BJ (cell line): ENCODE measurements at regions of chr1 and their contacts with region 1.

Region 1: GRCh38 chr1:17502326-17502778 is 37.1 kb upstream of the ARHGEF10L start:
- DNase-seq: peak; percentile 46
- H3K4me3 ChIP-seq: no peak overlapping the region
- H3K27me3 ChIP-seq: no peaks in the 10 kb centered on the region
- CTCF ChIP-seq: peak; percentile 96

Region 2: DNA sequence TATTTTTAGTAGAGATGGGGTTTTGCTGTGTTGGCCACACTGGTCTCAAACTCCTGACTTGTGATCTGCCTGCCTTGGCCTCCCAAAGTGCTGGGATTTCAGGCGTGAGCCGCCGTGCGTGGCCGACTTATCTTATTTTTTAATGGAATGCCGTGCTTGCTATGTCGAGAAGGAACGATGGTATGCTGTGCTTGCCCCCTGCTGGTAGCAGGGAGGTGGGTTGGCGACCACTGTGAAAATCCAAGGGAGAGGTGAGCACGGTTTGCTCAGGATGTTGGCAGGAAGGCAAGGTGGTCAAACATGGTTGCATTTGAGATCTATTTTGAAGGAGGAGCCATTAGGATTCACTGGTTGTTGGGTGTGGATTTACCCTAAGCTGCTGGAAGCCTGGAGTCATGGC is 17.1 kb before region 1 on chr1:
- CTCF ChIA-PET with region 1: interaction called, 14 read pairs
- POLR2A ChIA-PET with region 1: no interaction called
- DNase-seq: no peak
- H3K4me3 ChIP-seq: no peak overlapping the region
- H3K27me3 ChIP-seq: no peaks in the 10 kb centered on the region
- CTCF ChIP-seq: peak; percentile 37; the same call in 1 of the 2 replicates

Region 3: DNA sequence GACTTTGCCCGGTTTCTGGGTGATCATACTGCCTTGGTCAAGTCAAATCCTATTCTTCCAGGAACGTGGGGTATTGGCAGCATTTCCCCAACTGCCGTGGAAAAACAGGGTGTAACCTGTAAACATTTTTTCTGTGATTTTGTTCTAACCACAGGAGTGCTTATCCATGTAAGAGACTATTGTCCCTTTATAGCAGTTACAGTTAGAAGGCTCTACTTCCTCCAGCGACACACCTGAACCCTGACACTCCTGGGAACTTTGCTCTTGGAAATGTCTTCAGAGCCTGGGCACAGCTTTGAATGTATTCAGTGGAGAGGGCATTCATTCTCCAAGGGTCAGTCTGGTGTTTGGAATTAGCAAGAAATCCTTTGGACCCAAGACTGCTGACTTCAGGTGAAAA is 10.8 kb after region 1 on chr1:
- CTCF ChIA-PET with region 1: interaction called, 33 read pairs
- POLR2A ChIA-PET with region 1: no interaction called
- DNase-seq: no peak
- H3K4me3 ChIP-seq: no peak overlapping the region
- H3K27me3 ChIP-seq: peaks cover 4% of the 10 kb centered on the region; the same call in 1 of the 2 replicates
- CTCF ChIP-seq: no peak

Region 4: DNA sequence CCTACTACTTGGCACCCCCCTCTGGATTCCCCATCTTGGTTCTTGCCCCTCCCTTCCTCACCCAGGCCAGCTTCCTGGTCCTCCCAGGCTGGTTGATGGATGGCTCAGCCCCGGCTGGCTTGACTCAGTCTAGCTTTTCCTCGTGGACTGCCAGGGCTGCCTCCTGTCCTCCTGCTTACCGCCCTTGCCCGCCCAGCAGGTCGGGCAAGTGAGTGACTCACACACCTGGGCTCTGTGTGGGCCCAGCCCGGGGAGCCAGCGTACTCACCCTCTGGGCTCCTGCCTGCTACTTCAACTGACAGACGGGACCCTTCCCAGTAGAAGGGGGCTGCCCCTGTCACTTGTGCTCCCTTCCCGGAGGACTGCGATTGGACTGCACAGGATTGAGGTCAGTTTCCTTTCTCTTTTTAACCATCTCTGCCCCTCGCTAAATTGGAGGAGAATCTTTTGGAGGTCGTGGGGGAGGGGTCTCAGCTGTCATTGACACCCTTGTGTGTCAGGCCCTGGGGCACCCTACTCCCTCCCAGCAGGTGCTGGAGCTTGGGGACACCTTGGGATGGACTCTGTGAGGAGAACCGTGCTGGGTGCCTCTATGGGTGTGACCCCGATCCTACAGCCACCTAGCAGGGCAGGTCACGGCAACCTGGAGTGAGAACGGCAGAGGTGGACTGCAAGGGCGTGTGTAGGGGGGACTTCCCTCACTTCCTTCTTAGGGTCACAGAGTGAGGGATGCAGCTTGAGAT is 17.9 kb after region 1 on chr1:
- CTCF ChIA-PET with region 1: interaction called, 33 read pairs
- POLR2A ChIA-PET with region 1: no interaction called
- DNase-seq: no peak
- H3K4me3 ChIP-seq: no peak overlapping the region
- H3K27me3 ChIP-seq: peaks cover 3% of the 10 kb centered on the region; the same call in 1 of the 2 replicates
- CTCF ChIP-seq: no peak

Region 5: DNA sequence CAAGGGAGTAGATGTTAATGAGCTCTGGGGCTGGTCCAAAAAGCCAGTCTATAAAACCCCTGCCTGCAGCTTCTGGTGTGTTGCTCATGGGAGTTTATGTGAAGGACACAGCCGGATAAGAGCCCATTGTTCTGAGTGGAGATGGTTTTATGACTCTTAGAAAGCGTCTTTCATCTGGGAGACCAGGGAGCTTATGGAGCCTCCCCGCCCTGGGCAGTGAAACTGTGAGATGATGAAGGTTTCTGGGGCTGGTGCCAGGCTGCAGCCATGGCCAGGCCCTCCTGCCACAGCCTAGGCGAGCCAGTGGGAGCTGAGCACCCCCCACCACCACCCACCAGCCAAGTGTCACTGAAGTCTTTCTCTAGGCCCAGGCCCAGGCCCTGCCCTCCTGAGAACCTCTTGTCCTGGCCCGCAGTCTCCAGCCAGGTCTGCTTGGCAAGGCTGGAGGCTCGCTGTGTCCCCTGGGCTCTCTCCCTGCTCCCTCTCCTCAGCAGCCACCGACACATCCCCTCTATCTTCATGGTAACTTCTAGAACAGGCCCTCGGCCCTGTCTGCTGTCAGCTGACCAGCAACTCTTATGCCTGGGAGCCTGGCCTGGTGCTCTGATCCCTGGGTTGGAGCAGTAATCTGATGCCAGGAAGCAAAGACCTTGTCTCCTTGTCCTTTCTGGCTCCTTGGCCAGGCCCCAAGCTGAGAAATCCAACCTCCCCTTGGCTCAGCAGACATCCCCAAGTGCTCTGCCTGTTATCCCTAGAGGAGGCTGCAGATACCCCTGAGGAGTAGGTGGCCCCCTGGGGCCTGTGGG is 29.5 kb after region 1 on chr1:
- CTCF ChIA-PET with region 1: interaction called, 11 read pairs
- POLR2A ChIA-PET with region 1: no interaction called
- DNase-seq: no peak
- H3K4me3 ChIP-seq: no peak overlapping the region
- H3K27me3 ChIP-seq: no peaks in the 10 kb centered on the region; the same call in 1 of the 2 replicates
- CTCF ChIP-seq: no peak

Region 6: DNA sequence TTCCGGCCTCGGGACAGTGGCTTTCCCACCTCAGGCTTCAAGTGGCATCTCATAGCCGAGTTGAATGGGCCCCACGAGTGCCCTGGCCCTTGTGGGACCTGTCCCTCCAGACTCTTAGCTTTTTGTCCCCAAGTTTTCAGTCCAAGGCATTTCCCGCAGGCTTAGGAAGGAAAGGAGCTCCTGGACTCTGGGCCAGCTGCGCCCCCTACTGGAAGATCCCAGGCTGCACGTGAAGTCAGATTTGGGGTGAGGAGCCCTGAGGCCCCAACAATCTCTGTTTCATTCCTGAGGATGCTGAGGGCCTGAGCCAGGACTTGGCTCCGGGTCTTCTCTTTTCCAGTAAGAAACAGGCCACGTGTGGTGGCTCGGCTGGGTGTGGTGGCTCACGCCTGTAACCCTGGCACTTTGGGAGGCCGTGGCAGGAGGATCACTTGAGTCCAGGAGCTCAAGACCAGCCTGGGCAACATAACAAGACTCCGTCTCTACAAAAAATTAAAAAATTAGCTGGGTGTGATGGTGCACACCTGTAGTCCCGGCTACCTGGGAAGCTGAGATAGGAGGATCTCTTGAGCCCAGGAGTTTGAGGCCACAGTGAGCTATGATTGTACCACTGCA is 104.6 kb after region 1 on chr1:
- CTCF ChIA-PET with region 1: interaction called, 531 read pairs
- POLR2A ChIA-PET with region 1: no interaction called
- DNase-seq: no peak
- H3K4me3 ChIP-seq: no peak overlapping the region
- H3K27me3 ChIP-seq: no peaks in the 10 kb centered on the region
- CTCF ChIP-seq: peak; percentile 97

Region 7: GRCh38 chr1:17617787-17618557 is 115.6 kb after region 1 on chr1:
- CTCF ChIA-PET with region 1: interaction called, 531 read pairs
- POLR2A ChIA-PET with region 1: no interaction called
- DNase-seq: no peak
- H3K4me3 ChIP-seq: no peak overlapping the region
- H3K27me3 ChIP-seq: no peaks in the 10 kb centered on the region
- CTCF ChIP-seq: no peak